Vagina (tissue), 2 donors: ENCODE measurements at regions of chr15 and their contacts with region 1.

Region 1: GRCh38 chr15:70488002-70488605 is 275.3 kb downstream of the UACA start:
- DNase-seq: no peak
- H3K4me3 ChIP-seq: no peak overlapping the region
- H3K27ac ChIP-seq: no peak overlapping the region
- H3K4me1 ChIP-seq: peaks cover 8% of the 10 kb centered on the region
- H3K27me3 ChIP-seq: no peaks in the 10 kb centered on the region
- CTCF ChIP-seq: peak; percentile 81 to 98 (median 82)
- POLR2A ChIP-seq: no peak

Region 2: GRCh38 chr15:69475769-69476358 is 1012.2 kb before region 1 on chr15:
- intact Hi-C with region 1: loop called (anchors 10 kb)
- DNase-seq: no peak
- H3K4me3 ChIP-seq: no peak overlapping the region
- H3K27ac ChIP-seq: no peak overlapping the region
- H3K4me1 ChIP-seq: no peaks in the 10 kb centered on the region
- H3K27me3 ChIP-seq: no peaks in the 10 kb centered on the region
- CTCF ChIP-seq: peak; percentile 74 to 93 (median 89)
- POLR2A ChIP-seq: no peak